Heart left ventricle (tissue), 16 donors: ENCODE measurements at regions of chr7 and their contacts with region 1.

Region 1: GRCh38 chr7:131959106-131959812 is 402.8 kb upstream of the PODXL start:
- DNase-seq: peak in 1 of 5 donors; percentile 28
- ATAC-seq: peak in 3 of 4 donors; percentile 61 to 69 (median 64)
- H3K4me3 ChIP-seq: no peak overlapping the region
- H3K27ac ChIP-seq: no peak overlapping the region
- H3K4me1 ChIP-seq: peaks cover 0 to 8% (median 0%) of the 10 kb centered on the region in 12 donors
- H3K27me3 ChIP-seq: peaks cover 0 to 4% (median 0%) of the 10 kb centered on the region in 9 donors
- CTCF ChIP-seq: no peak
- POLR2A ChIP-seq: no peak

Region 2: GRCh38 chr7:131843898-131844331 is 115.3 kb before region 1 on chr7:
- intact Hi-C with region 1: no loop called
- DNase-seq: peak in 1 of 5 donors; percentile 15
- ATAC-seq: peak in 3 of 4 donors; percentile 47 to 77 (median 71)
- H3K4me3 ChIP-seq: no peak overlapping the region
- H3K27ac ChIP-seq: no peak overlapping the region
- H3K4me1 ChIP-seq: peaks cover 0 to 7% (median 0%) of the 10 kb centered on the region in 12 donors
- H3K27me3 ChIP-seq: peaks cover 0 to 26% (median 4%) of the 10 kb centered on the region in 9 donors
- CTCF ChIP-seq: no peak
- POLR2A ChIP-seq: no peak

Region 3: GRCh38 chr7:132004536-132005272 is 45.4 kb after region 1 on chr7:
- intact Hi-C with region 1: no loop called
- DNase-seq: peak in 3 of 5 donors; percentile 21 to 43 (median 41)
- ATAC-seq: peak; percentile 71 to 90 (median 88)
- H3K4me3 ChIP-seq: no peak overlapping the region
- H3K27ac ChIP-seq: no peak overlapping the region
- H3K4me1 ChIP-seq: peaks cover 0 to 2% (median 0%) of the 10 kb centered on the region in 12 donors
- H3K27me3 ChIP-seq: no peaks in the 10 kb centered on the region
- CTCF ChIP-seq: peak in 11 of 12 donors; percentile 15 to 57 (median 46)
- POLR2A ChIP-seq: no peak

Region 4: DNA sequence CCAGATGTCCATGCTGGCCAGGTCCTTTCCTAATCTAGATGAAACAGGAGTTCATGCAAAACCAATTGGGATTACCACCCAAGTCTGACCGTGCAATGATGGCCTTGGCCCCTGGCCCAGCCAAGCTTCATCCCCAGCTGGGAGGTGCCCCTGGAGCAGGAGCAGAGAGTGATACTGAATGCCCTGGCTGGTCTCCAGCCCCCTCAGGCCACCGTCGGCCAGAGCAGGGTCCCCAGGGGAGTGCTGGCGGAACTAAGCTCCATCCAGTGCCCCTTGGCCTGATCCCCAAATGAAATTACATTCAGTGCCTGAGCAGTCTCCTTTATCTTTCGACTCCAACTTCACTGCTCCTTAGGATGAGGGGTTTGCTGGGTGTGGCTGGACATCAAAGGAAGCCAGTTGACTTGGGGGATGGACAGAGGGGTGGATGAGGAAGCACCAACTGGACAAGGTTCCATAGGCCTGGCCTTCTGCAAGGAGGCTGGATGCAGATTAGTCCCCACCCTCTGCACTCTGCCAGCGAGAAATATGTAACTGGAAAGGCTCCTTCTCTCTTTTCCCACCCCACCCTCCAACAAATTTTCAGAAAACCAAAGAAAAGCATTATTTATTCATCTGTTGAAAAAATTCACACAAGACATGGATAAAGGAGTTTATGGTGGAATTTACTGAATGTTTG is 341.5 kb after region 1 on chr7:
- intact Hi-C with region 1: loop called in 1 of 10 experiments (anchors 5 kb)
- DNase-seq: no peak
- ATAC-seq: no peak
- H3K4me3 ChIP-seq: no peak overlapping the region
- H3K27ac ChIP-seq: no peak overlapping the region
- H3K4me1 ChIP-seq: no peaks in the 10 kb centered on the region
- H3K27me3 ChIP-seq: no peaks in the 10 kb centered on the region
- CTCF ChIP-seq: no peak
- POLR2A ChIP-seq: no peak